Naive thymus-derived CD4-positive, alpha-beta T cell (primary cell): ENCODE measurements at regions of chr6 and their contacts with region 1.

Region 1: DNA sequence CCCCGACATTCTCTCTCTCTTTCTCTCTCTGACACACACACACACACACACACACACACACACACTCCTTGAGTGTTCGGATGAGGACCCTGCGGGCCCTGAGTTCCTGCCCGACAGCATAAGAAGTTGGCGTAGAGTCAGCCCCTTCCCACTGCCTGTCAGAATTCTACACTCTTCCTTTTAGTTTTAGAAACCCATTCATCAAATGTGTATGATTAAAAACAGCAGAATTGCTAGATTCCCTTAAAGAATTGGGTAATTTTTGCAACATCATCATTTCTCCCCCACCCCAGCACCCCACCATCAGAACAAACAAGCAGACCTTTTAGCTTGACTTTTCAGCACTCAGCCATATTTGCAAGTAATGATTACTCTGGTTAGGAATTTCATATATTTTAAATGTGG is 322.8 kb downstream of the FARS2 start:
- DNase-seq: no peak
- ATAC-seq: no peak
- H3K4me3 ChIP-seq: no peak overlapping the region
- H3K4me3 Mint-ChIP-seq: peak overlapping the region in 1 of 10 donors; percentile 45
- H3K27ac ChIP-seq: no peak overlapping the region
- H3K27ac Mint-ChIP-seq: no peak overlapping the region
- H3K4me1 ChIP-seq: peaks cover 0 to 12% of the 10 kb centered on the region in 2 donors
- H3K4me1 Mint-ChIP-seq: peaks cover 9 to 25% (median 19%) of the 10 kb centered on the region in 7 donors
- H3K27me3 ChIP-seq: no peaks in the 10 kb centered on the region
- H3K27me3 Mint-ChIP-seq: no peaks in the 10 kb centered on the region

Region 2: DNA sequence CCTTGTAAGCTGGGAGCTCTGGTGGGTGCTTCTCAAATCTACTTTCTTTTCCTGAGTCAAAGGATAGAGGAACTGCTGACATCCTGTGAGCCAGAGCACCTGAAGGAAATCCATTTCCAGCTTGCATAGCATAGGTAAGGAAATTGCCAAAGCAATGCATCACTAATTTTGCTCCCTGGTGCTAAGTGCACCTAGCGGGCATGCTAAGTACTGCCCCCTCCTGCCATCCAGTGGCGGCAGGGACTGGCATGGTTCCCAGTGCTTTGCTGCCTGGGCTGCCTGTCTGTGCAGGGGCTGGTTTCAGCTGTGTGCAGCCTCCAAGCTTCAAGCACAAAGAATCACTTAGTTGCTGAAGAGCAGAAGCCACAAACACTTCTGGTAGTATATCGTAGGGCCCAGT is 258.9 kb before region 1 on chr6:
- CTCF ChIA-PET with region 1: no interaction called
- POLR2A ChIA-PET with region 1: no interaction called
- intact Hi-C with region 1: no loop called
- DNase-seq: no peak
- ATAC-seq: no peak
- H3K4me3 ChIP-seq: no peak overlapping the region
- H3K4me3 Mint-ChIP-seq: no peak overlapping the region
- H3K27ac ChIP-seq: no peak overlapping the region
- H3K27ac Mint-ChIP-seq: peak overlapping the region in 1 of 9 donors; percentile 38
- H3K4me1 ChIP-seq: no peaks in the 10 kb centered on the region
- H3K4me1 Mint-ChIP-seq: peaks cover 0 to 26% (median 18%) of the 10 kb centered on the region in 7 donors
- H3K27me3 ChIP-seq: no peaks in the 10 kb centered on the region
- H3K27me3 Mint-ChIP-seq: no peaks in the 10 kb centered on the region

Region 3: GRCh38 chr6:5746053-5746758 is 162.1 kb after region 1 on chr6:
- CTCF ChIA-PET with region 1: no interaction called
- POLR2A ChIA-PET with region 1: no interaction called
- intact Hi-C with region 1: loop called in 1 of 2 experiments (anchors 10 kb)
- DNase-seq: no peak
- ATAC-seq: no peak
- H3K4me3 ChIP-seq: no peak overlapping the region
- H3K4me3 Mint-ChIP-seq: no peak overlapping the region
- H3K27ac ChIP-seq: no peak overlapping the region
- H3K27ac Mint-ChIP-seq: no peak overlapping the region
- H3K4me1 ChIP-seq: no peaks in the 10 kb centered on the region
- H3K4me1 Mint-ChIP-seq: peaks cover 0 to 23% (median 4%) of the 10 kb centered on the region in 7 donors
- H3K27me3 ChIP-seq: no peaks in the 10 kb centered on the region
- H3K27me3 Mint-ChIP-seq: no peaks in the 10 kb centered on the region

Region 4: DNA sequence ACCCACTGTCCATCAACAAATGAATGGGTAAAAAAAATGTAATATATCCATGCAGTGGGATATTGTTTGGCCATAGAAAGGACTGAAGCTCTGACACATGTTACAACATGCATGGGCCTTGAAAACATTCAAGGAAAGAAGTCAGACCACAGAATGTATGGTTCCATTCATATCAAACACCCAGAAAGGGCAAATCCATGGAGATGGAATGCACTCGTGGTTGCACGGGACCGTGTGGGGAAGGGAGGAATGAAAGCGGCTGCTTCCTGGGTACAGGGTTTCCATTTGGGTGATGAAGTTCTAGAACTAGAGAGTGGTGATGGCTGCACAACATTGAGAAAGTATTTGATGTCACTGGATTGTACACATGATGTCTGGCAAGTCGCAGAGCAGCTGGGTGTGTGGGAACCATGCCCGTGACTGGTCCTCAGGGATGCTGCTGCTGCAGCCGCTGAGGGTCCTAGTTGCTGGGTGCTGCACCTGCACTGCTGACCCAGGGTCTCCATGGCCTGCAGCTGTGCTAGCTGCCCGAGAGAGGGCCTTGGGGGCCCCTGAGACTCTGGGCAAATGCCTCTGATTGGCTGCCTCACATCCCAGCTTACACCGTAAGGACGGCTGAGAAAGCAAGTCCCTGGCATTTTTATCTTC is 202.4 kb after region 1 on chr6:
- CTCF ChIA-PET with region 1: no interaction called
- POLR2A ChIA-PET with region 1: no interaction called
- intact Hi-C with region 1: loop called in 1 of 2 experiments (anchors 2 kb)
- DNase-seq: no peak
- ATAC-seq: peak; percentile 20
- H3K4me3 ChIP-seq: no peak overlapping the region
- H3K4me3 Mint-ChIP-seq: peak overlapping the region in 5 of 10 donors; percentile 8 to 56 (median 46)
- H3K27ac ChIP-seq: no peak overlapping the region
- H3K27ac Mint-ChIP-seq: peak overlapping the region in 3 of 9 donors; percentile 25 to 78 (median 53)
- H3K4me1 ChIP-seq: peaks cover 0 to 11% of the 10 kb centered on the region in 2 donors
- H3K4me1 Mint-ChIP-seq: peaks cover 0 to 27% (median 23%) of the 10 kb centered on the region in 7 donors
- H3K27me3 ChIP-seq: no peaks in the 10 kb centered on the region
- H3K27me3 Mint-ChIP-seq: peaks cover 0 to 4% (median 0%) of the 10 kb centered on the region in 5 donors

Region 5: GRCh38 chr6:5878792-5879191 is 294.7 kb after region 1 on chr6:
- CTCF ChIA-PET with region 1: no interaction called
- POLR2A ChIA-PET with region 1: no interaction called
- intact Hi-C with region 1: loop called in 1 of 2 experiments (anchors 1 kb)
- DNase-seq: peak in 1 of 9 donors; percentile 13
- ATAC-seq: no peak
- H3K4me3 ChIP-seq: no peak overlapping the region
- H3K4me3 Mint-ChIP-seq: no peak overlapping the region
- H3K27ac ChIP-seq: no peak overlapping the region
- H3K27ac Mint-ChIP-seq: peak overlapping the region in 1 of 9 donors; percentile 15
- H3K4me1 ChIP-seq: peaks cover 0 to 5% of the 10 kb centered on the region in 2 donors
- H3K4me1 Mint-ChIP-seq: peaks cover 5 to 26% (median 9%) of the 10 kb centered on the region in 7 donors
- H3K27me3 ChIP-seq: no peaks in the 10 kb centered on the region
- H3K27me3 Mint-ChIP-seq: peaks cover 0 to 24% (median 0%) of the 10 kb centered on the region in 5 donors

Region 6: GRCh38 chr6:5892669-5893068 is 308.6 kb after region 1 on chr6:
- CTCF ChIA-PET with region 1: no interaction called
- POLR2A ChIA-PET with region 1: no interaction called
- intact Hi-C with region 1: loop called in 1 of 2 experiments (anchors 1 kb)
- DNase-seq: no peak
- ATAC-seq: no peak
- H3K4me3 ChIP-seq: peak overlapping the region; percentile 19
- H3K4me3 Mint-ChIP-seq: peak overlapping the region in 9 of 10 donors; percentile 84 to 95 (median 93)
- H3K27ac ChIP-seq: peak overlapping the region; percentile 53
- H3K27ac Mint-ChIP-seq: peak overlapping the region; percentile 90 to 98 (median 95)
- H3K4me1 ChIP-seq: no peaks in the 10 kb centered on the region
- H3K4me1 Mint-ChIP-seq: peaks cover 5 to 12% (median 7%) of the 10 kb centered on the region in 7 donors
- H3K27me3 ChIP-seq: no peaks in the 10 kb centered on the region
- H3K27me3 Mint-ChIP-seq: peaks cover 0 to 7% (median 0%) of the 10 kb centered on the region in 5 donors

Region 7: GRCh38 chr6:6057424-6058053 is 473.5 kb after region 1 on chr6:
- CTCF ChIA-PET with region 1: no interaction called
- POLR2A ChIA-PET with region 1: no interaction called
- intact Hi-C with region 1: loop called in 1 of 2 experiments (anchors 5 kb)
- DNase-seq: peak in 5 of 9 donors; percentile 14 to 40 (median 26)
- ATAC-seq: peak; percentile 63
- H3K4me3 ChIP-seq: no peak overlapping the region
- H3K4me3 Mint-ChIP-seq: no peak overlapping the region
- H3K27ac ChIP-seq: no peak overlapping the region
- H3K27ac Mint-ChIP-seq: no peak overlapping the region
- H3K4me1 ChIP-seq: no peaks in the 10 kb centered on the region
- H3K4me1 Mint-ChIP-seq: no peaks in the 10 kb centered on the region
- H3K27me3 ChIP-seq: peaks cover 0 to 3% of the 10 kb centered on the region in 2 donors
- H3K27me3 Mint-ChIP-seq: peaks cover 26 to 48% (median 32%) of the 10 kb centered on the region in 5 donors